Left ventricle myocardium inferior (tissue), 1 donor: ENCODE measurements at regions of chr4 and their contacts with region 1.

Region 1: DNA sequence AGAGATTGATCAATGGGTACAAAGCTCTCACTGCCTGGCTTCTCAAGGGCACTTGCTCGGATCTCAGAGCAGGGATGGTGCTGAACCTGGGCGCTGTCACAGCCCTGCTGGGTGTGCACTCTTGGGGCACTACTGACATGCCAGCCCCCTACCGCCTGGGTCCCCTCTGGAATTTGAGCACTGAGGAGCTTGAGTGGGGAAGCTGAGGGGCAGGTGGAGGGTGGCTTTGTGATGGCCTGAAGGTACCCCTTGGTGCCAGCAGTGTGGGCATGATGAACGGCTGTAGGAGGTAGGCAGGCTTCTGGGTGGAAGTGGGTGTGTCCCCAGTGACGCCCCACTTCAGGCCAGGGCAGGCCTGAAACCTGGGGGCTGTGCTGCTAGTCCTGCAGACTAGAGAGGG is 379.1 kb upstream of the GRID2 start:
- DNase-seq: no peak
- H3K4me3 ChIP-seq: no peak overlapping the region
- H3K27ac ChIP-seq: no peak overlapping the region
- H3K4me1 ChIP-seq: no peaks in the 10 kb centered on the region
- H3K27me3 ChIP-seq: no peaks in the 10 kb centered on the region
- CTCF ChIP-seq: no peak

Region 2: GRCh38 chr4:90689739-90690138 is 1234.9 kb before region 1 on chr4:
- intact Hi-C with region 1: loop called (anchors 10 kb)
- DNase-seq: no peak
- H3K4me3 ChIP-seq: no peak overlapping the region
- H3K27ac ChIP-seq: no peak overlapping the region
- H3K4me1 ChIP-seq: no peaks in the 10 kb centered on the region
- H3K27me3 ChIP-seq: no peaks in the 10 kb centered on the region
- CTCF ChIP-seq: no peak

Region 3: GRCh38 chr4:92433272-92433758 is 508.7 kb after region 1 on chr4:
- intact Hi-C with region 1: no loop called
- DNase-seq: no peak
- H3K4me3 ChIP-seq: no peak overlapping the region
- H3K27ac ChIP-seq: no peak overlapping the region
- H3K4me1 ChIP-seq: no peaks in the 10 kb centered on the region
- H3K27me3 ChIP-seq: no peaks in the 10 kb centered on the region
- CTCF ChIP-seq: no peak